ENCODE measurements at regions of chr1 and their contacts with region 1.

Region 1: DNA sequence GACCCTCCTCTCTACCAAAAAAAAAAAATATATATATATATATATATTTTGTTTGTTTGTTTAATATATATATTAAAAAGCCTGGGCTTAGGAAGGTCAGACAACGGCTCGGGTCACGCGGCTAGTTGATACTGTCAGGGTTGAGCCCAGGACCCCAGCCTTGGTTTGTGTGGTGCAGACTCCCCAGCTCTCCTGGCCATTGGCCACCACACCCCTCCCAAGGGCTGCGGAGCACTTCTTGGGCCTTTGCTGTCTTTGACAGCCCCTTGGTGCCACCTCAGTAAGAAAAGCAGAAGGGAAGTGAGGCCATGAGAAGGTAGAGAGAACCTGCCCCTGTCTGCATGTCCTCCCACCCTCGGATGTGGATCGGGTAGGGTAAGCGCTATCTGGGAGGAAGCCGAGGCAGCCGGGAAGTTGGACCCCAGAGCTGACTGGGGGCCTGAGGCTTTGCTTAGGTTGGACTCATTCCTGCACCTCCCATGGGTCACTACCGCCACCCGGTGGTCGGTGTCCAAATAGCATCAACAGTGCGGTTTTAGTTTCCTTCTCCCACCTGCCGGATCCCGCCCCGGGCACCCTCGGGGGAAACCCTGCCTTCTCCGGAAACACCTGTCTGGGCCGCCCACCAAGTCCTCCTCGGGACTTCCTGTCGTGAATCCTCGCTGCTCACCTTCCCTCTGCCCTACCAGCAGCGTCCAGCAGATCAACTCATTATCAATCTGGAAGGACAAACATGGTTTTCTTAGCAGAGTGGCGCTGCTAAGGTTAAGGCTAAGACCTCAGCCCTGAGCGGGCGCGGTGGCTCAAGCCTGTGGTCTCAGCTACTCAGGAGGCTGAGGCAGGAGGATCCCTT is 29.8 kb upstream of the GNPAT start:
- DNase-seq: peak; percentile 94
- H3K4me3 Mint-ChIP-seq: peak overlapping the region; percentile 77
- H3K27ac Mint-ChIP-seq: peak overlapping the region; percentile 70
- H3K4me1 Mint-ChIP-seq: peaks cover 10% of the 10 kb centered on the region
- H3K27me3 Mint-ChIP-seq: no peaks in the 10 kb centered on the region
- CTCF ChIP-seq: peak; percentile 100

Region 2: GRCh38 chr1:229625071-229625914 is 1585.9 kb before region 1 on chr1:
- CTCF ChIA-PET with region 1: no interaction called
- POLR2A ChIA-PET with region 1: no interaction called
- intact Hi-C with region 1: no loop called
- DNase-seq: peak; percentile 69
- H3K4me3 Mint-ChIP-seq: peak overlapping the region; percentile 99
- H3K27ac Mint-ChIP-seq: peak overlapping the region; percentile 5
- H3K4me1 Mint-ChIP-seq: peaks cover 63% of the 10 kb centered on the region
- H3K27me3 Mint-ChIP-seq: no peaks in the 10 kb centered on the region
- CTCF ChIP-seq: no peak

Region 3: DNA sequence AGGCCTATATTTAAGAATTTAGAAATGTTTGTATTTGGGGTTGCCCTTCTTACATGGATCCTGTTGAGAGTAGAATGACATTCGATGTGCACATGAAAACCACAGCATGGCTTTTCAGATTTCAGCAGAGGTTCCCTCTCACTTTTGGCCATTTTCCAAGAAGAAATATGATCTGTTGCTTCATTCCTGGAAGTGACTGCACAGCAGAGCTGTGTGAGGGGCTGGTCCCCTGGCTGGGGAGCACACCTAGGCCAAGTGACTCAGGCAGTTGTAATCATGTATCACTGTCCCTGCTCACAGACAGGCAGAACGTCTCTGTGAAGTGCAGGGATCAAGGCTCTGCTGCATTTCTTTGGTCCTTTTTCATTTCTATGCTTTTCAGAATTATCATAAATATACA is 529.6 kb before region 1 on chr1:
- CTCF ChIA-PET with region 1: interaction called, 3 read pairs
- POLR2A ChIA-PET with region 1: no interaction called
- intact Hi-C with region 1: loop called (anchors 5 kb)
- DNase-seq: peak; percentile 97
- H3K4me3 Mint-ChIP-seq: no peak overlapping the region
- H3K27ac Mint-ChIP-seq: peak overlapping the region; percentile 4
- H3K4me1 Mint-ChIP-seq: peaks cover 24% of the 10 kb centered on the region
- H3K27me3 Mint-ChIP-seq: no peaks in the 10 kb centered on the region
- CTCF ChIP-seq: no peak

Region 4: DNA sequence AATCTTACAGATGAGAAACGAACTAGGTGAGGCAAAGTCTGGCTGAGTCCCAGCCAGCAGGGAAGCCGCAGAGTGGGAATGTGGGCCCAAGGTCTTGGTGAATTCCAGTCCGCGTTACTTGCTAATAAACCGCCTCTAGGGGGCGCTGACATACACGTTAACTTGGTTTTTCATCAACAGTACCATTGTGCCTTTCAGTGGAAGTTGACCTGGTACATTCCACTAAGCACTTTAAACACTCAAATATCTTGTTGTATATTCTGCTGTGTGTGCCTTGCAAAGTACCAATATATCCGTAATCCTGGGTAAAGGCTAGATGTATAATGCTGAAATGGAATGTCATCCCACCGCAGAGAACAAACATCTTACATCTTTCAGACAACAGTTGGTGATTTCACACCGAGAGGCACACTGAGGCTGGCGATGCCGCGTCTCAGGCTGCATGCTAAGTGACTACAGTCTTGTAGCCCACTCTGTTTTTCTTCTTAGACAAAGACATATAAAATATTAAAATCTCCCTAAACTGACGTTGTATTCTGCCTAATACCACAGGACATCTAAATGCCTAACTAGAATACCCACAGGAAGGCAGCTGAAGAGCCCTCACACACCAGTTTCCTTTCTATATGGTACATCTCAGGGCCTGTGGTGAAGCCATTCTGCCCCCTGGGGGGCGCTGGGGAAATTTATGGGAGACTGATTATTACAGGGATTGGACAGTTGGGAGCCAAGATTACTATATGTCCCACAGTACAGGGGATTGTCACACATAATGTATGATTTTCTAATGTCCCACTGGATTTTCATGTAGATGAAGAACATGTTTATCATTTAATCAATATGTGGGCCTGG is 293.7 kb before region 1 on chr1:
- CTCF ChIA-PET with region 1: interaction called, 34 read pairs
- POLR2A ChIA-PET with region 1: no interaction called
- intact Hi-C with region 1: loop called (anchors 1 kb)
- DNase-seq: peak; percentile 93
- H3K4me3 Mint-ChIP-seq: no peak overlapping the region
- H3K27ac Mint-ChIP-seq: no peak overlapping the region
- H3K4me1 Mint-ChIP-seq: peaks cover 6% of the 10 kb centered on the region
- H3K27me3 Mint-ChIP-seq: no peaks in the 10 kb centered on the region
- CTCF ChIP-seq: peak; percentile 96

Region 5: DNA sequence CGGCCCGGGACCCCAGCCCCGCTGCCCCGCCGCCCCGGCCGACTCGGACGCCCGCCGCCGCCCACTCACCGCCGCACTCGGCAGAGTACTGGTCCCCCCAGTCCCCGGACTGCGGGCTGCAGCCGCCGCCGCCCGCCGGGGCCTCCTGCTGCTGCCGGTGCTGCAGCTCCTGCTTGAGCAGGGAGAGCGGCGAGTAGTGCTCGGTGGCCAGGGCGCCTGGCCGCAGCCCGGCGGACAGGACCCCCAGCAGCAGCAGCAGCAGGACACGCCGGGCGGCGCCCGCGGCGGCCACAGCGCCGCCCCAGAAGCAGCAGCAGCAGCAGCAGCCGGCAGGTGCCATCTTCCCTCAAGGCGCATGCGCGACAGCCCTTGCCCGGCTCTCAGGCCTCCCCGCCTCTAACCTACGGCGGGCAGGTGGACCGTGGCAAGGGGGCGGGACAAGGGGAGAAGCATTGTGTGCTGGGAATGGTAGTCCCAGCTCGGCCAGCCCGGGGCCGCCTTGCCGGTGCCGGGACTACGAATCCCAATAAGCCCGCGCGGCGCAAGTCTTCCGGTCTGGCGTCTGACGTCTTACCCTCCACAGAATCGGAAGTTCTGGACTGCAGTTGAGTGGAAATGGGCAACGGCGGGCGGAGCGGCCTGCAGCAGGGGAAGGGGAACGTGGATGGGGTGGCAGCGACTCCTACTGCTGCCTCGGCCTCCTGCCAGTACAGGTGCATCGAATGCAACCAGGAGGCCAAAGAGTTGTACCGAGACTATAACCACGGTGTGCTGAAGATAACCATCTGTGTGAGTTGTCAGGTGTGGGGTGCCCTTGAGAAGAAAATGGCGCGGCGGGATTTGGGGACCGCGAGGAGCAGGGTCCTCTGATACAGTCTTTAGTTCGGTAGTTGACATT is 232.5 kb before region 1 on chr1 and contains the starts of genes ARV1 and TTC13:
- CTCF ChIA-PET with region 1: interaction called, 8 read pairs
- POLR2A ChIA-PET with region 1: interaction called, 15 read pairs
- intact Hi-C with region 1: loop called (anchors 2 kb)
- DNase-seq: peak; percentile 100
- H3K4me3 Mint-ChIP-seq: no peak within 1 kb of the TSS
- H3K27ac Mint-ChIP-seq: peak within 1 kb of the TSS; percentile 83
- H3K4me1 Mint-ChIP-seq: peaks cover 7% of the 10 kb centered on the region
- H3K27me3 Mint-ChIP-seq: no peaks in the 10 kb centered on the region
- CTCF ChIP-seq: peak; percentile 15
- total RNA-seq, gene ARV1: 41.8 and 51.8 TPM in 2 replicates
- total RNA-seq, gene TTC13: 29.9 and 35.2 TPM in 2 replicates

Region 6: GRCh38 chr1:231165371-231165770 is 45.9 kb before region 1 on chr1:
- CTCF ChIA-PET with region 1: interaction called, 14 read pairs
- POLR2A ChIA-PET with region 1: no interaction called
- intact Hi-C with region 1: no loop called
- DNase-seq: no peak
- H3K4me3 Mint-ChIP-seq: no peak overlapping the region
- H3K27ac Mint-ChIP-seq: no peak overlapping the region
- H3K4me1 Mint-ChIP-seq: no peaks in the 10 kb centered on the region
- H3K27me3 Mint-ChIP-seq: peaks cover 34% of the 10 kb centered on the region
- CTCF ChIP-seq: no peak

Region 7: DNA sequence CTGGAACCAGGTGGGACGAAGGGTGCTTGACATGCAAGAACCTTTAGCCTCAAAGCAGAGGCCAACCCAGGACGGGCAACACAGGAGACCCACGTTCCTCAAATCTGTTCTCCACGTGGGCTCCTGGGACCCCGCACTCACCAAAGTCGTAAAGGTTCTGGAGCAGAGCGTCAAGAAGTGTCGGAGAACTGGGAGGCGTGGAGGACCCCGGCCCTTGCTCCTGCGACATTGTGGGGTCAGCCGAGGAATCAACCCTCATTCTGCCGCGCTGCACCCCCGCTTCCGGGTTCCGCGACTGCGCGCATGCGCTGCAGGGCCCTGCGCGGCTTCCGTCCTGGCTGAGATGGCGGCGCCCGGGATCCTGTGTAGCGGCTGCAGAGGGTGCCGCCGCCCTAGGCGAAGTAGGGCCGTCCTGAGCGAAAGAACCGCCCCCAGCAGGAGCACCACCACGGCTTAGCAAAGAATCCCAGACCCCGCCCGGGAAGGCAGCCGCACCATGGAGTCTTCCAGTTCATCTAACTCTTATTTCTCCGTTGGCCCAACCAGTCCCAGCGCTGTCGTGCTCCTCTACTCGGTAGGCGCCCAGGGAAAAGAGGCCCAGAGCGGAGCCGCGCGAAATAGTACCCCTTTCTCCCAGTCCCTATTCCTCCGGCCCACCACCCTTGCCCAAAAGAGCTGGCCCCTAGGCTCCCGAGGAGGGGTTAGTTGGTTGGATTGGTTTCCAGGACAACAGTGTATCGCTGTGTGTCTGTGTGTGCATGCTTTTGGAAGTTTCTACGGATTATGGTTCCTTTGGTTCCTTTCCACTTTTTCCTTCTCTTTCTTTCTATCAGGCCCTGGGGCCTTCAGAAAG is 29.9 kb after region 1 on chr1 and contains the start of gene GNPAT:
- CTCF ChIA-PET with region 1: interaction called, 9 read pairs
- POLR2A ChIA-PET with region 1: interaction called, 15 read pairs
- intact Hi-C with region 1: no loop called
- DNase-seq: peak; percentile 95
- H3K4me3 Mint-ChIP-seq: peak within 1 kb of the TSS; percentile 85
- H3K27ac Mint-ChIP-seq: peak within 1 kb of the TSS; percentile 97
- H3K4me1 Mint-ChIP-seq: peaks cover 50% of the 10 kb centered on the region
- H3K27me3 Mint-ChIP-seq: no peaks in the 10 kb centered on the region
- CTCF ChIP-seq: no peak
- total RNA-seq, gene GNPAT: 60.9 and 64.4 TPM in 2 replicates

Measured in MCF 10A (cell line).